ENCODE measurements at regions of chr3 and their contacts with region 1.

Region 1: GRCh38 chr3:105473521-105474223 is 107.0 kb downstream of the ALCAM start:
- DNase-seq: no peak
- H3K4me3 ChIP-seq: no peak overlapping the region
- H3K27ac ChIP-seq: no peak overlapping the region
- H3K4me1 ChIP-seq: no peaks in the 10 kb centered on the region
- H3K27me3 ChIP-seq: no peaks in the 10 kb centered on the region
- CTCF ChIP-seq: no peak
- EP300 ChIP-seq: no peak
- POLR2A ChIP-seq: no peak

Region 2: DNA sequence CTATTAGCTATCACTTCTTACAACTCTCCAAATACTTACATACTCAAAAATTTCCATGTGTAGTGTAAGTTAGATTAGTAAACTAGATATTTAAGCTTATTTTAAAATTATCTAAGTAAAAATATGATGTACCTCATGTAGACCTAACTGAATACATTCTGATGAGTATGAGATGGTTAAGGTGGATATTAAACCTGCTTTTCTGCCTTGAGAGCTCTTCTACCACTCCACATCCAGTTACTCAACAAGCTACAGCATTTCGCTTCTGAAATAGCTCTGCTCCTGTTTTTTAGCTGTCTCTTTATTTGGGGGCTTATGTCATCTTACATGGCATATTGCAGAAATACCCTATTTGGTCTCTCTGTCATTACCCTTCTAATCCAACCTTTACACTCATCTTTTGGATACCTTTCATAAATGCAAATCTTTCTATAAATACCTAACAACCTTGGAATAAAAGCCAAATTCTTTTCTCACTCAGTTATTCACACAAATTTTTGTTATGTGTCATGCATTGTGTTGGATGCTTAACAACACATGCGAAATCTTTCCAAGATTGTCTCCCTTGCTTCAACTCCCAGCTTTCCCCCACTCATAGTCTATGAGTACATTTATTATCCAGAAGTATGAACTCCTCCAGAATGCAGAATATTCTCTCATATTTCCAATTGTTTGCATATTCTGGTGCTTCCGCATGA is 15.0 kb before region 1 on chr3:
- intact Hi-C with region 1: loop called in 1 of 4 experiments (anchors 2 kb)
- DNase-seq: no peak
- H3K4me3 ChIP-seq: no peak overlapping the region
- H3K27ac ChIP-seq: no peak overlapping the region
- H3K4me1 ChIP-seq: no peaks in the 10 kb centered on the region
- H3K27me3 ChIP-seq: no peaks in the 10 kb centered on the region
- CTCF ChIP-seq: no peak
- EP300 ChIP-seq: no peak
- POLR2A ChIP-seq: no peak

Region 3: DNA sequence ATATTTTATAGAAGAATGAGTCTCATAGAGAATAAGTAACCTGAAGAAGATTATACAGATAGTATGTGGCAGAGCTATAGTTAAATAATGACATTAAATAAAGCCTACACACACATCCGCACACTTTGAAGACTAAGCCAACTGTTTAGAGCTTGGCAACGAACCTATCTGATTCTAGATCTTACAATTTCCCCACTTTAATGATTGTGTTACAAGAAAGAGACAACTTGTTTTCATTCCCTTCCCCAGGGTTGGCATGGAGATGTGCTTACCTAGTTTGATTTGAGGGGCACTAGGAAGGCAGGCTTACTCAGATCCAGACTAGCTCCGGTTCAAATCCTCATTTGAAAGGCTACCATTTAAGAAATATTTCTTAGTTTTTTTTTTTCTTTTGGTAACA is 457.1 kb after region 1 on chr3:
- intact Hi-C with region 1: no loop called
- DNase-seq: no peak
- H3K4me3 ChIP-seq: no peak overlapping the region
- H3K27ac ChIP-seq: no peak overlapping the region
- H3K4me1 ChIP-seq: no peaks in the 10 kb centered on the region
- H3K27me3 ChIP-seq: no peaks in the 10 kb centered on the region
- CTCF ChIP-seq: no peak
- EP300 ChIP-seq: no peak
- POLR2A ChIP-seq: no peak